ENCODE measurements at regions of chr6 and their contacts with region 1.

Region 1: GRCh38 chr6:114747987-114748630 is 405.3 kb upstream of the HS3ST5 start:
- DNase-seq: no peak
- ATAC-seq: no peak

Region 2: GRCh38 chr6:114833211-114833610 is 85.1 kb after region 1 on chr6:
- intact Hi-C with region 1: no loop called
- DNase-seq: no peak
- ATAC-seq: no peak

Region 3: DNA sequence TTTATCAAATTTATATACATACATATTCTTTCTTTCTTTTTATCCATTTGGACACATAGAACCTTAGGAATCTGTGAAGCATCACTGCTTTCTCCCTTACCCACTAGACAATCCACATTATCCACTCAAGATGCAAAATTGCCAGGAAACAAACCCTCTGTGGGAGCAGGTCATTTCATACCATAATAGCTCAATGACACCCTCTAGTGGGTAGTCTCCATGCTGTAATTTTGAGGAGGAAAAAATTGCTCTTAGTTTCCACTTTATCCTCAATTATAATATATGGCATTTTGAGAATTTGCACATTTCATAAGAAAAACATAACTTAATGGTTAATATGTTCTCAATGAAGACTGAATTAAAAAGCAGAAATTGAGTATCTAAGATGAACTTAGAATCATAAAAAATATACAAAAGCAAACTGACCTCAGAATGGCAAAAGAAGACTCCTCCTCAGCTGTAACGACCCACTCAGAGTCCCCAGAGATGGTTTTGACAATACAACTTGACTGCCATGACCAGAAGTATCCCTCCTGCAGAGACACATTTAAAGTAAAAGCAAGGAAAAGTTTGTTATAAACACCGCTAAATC is 1148.5 kb after region 1 on chr6:
- intact Hi-C with region 1: loop called (anchors 5 kb)
- DNase-seq: no peak
- ATAC-seq: peak; percentile 52

Measured in Right ventricle myocardium superior (tissue), 1 donor.